K562 (cell line): ENCODE measurements at regions of chr14 and their contacts with region 1.

Region 1: GRCh38 chr14:63276492-63277342 is 42.0 kb downstream of the GPHB5 start:
- DNase-seq: peak; percentile 26 to 40 (median 36)
- ATAC-seq: peak; percentile 52; the same call in 2 of the 3 replicates
- H3K4me3 ChIP-seq: no peak overlapping the region
- H3K27ac ChIP-seq: no peak overlapping the region
- H3K4me1 ChIP-seq: no peaks in the 10 kb centered on the region
- H3K27me3 ChIP-seq: no peaks in the 10 kb centered on the region
- CTCF ChIP-seq: peak; percentile 24 to 67 (median 63); a peak in 4 of 6 replicates
- EP300 ChIP-seq: no peak
- POLR2A ChIP-seq: no peak
- RAD21 ChIP-seq: peak; percentile 77 to 80

Region 2: GRCh38 chr14:61894452-61895077 is 1382.2 kb before region 1 on chr14:
- CTCF ChIA-PET with region 1: no interaction called
- POLR2A ChIA-PET with region 1: no interaction called
- in situ Hi-C with region 1: loop called (anchors 25 kb)
- intact Hi-C with region 1: no loop called
- DNase-seq: peak; percentile 40 to 63 (median 50)
- ATAC-seq: peak; percentile 88
- H3K4me3 ChIP-seq: no peak overlapping the region
- H3K27ac ChIP-seq: no peak overlapping the region
- H3K4me1 ChIP-seq: no peaks in the 10 kb centered on the region
- H3K27me3 ChIP-seq: no peaks in the 10 kb centered on the region; a peak in 1 of 5 replicates
- CTCF ChIP-seq: peak; percentile 55 to 64 (median 63)
- EP300 ChIP-seq: no peak
- POLR2A ChIP-seq: no peak
- RAD21 ChIP-seq: peak; percentile 19 to 59; a peak in 3 of 4 replicates

Region 3: GRCh38 chr14:62162998-62163589 is 1113.6 kb before region 1 on chr14:
- CTCF ChIA-PET with region 1: no interaction called
- POLR2A ChIA-PET with region 1: no interaction called
- in situ Hi-C with region 1: no loop called
- intact Hi-C with region 1: loop called (anchors 1 kb)
- DNase-seq: peak; percentile 6 to 26 (median 14)
- ATAC-seq: peak; percentile 67
- H3K4me3 ChIP-seq: no peak overlapping the region
- H3K27ac ChIP-seq: no peak overlapping the region
- H3K4me1 ChIP-seq: no peaks in the 10 kb centered on the region
- H3K27me3 ChIP-seq: no peaks in the 10 kb centered on the region
- CTCF ChIP-seq: peak; percentile 38 to 61 (median 55)
- EP300 ChIP-seq: no peak
- POLR2A ChIP-seq: no peak
- RAD21 ChIP-seq: peak; percentile 43 to 68

Region 4: GRCh38 chr14:62179367-62180018 is 1097.2 kb before region 1 on chr14:
- CTCF ChIA-PET with region 1: interaction called, 3 read pairs
- POLR2A ChIA-PET with region 1: no interaction called
- in situ Hi-C with region 1: loop called (anchors 10 kb)
- intact Hi-C with region 1: loop called (anchors 5 kb)
- DNase-seq: peak in 2 of 4 experiments; percentile 4 to 21
- ATAC-seq: no peak
- H3K4me3 ChIP-seq: no peak overlapping the region
- H3K27ac ChIP-seq: no peak overlapping the region
- H3K4me1 ChIP-seq: no peaks in the 10 kb centered on the region
- H3K27me3 ChIP-seq: no peaks in the 10 kb centered on the region
- CTCF ChIP-seq: peak in 1 of 3 experiments; percentile 36; a peak in 2 of 6 replicates
- EP300 ChIP-seq: no peak
- POLR2A ChIP-seq: no peak
- RAD21 ChIP-seq: peak; percentile 48 to 67

Region 5: GRCh38 chr14:63174760-63175211 is 101.9 kb before region 1 on chr14:
- CTCF ChIA-PET with region 1: interaction called, 3 read pairs
- POLR2A ChIA-PET with region 1: no interaction called
- in situ Hi-C with region 1: no loop called
- intact Hi-C with region 1: loop called (anchors 5 kb)
- DNase-seq: peak in 3 of 4 experiments; percentile 5 to 9 (median 5)
- ATAC-seq: no peak
- H3K4me3 ChIP-seq: no peak overlapping the region
- H3K27ac ChIP-seq: no peak overlapping the region
- H3K4me1 ChIP-seq: no peaks in the 10 kb centered on the region
- H3K27me3 ChIP-seq: no peaks in the 10 kb centered on the region
- CTCF ChIP-seq: peak; percentile 13 to 36 (median 32); a peak in 3 of 6 replicates
- EP300 ChIP-seq: no peak
- POLR2A ChIP-seq: no peak
- RAD21 ChIP-seq: peak in 1 of 2 experiments; percentile 16; a peak in 1 of 4 replicates